Activated CD4-positive, alpha-beta memory T cell treated with anti-CD3 and anti-CD28 coated beads for 36 hours (primary cell): ENCODE measurements at regions of chr7 and their contacts with region 1.

Region 1: GRCh38 chr7:47945261-47946001 is 2.8 kb downstream of the PKD1L1 start:
- DNase-seq: peak; percentile 81
- H3K4me3 Mint-ChIP-seq: no peak overlapping the region
- H3K27ac Mint-ChIP-seq: no peak overlapping the region
- H3K4me1 Mint-ChIP-seq: no peaks in the 10 kb centered on the region
- H3K27me3 Mint-ChIP-seq: no peaks in the 10 kb centered on the region

Region 2: DNA sequence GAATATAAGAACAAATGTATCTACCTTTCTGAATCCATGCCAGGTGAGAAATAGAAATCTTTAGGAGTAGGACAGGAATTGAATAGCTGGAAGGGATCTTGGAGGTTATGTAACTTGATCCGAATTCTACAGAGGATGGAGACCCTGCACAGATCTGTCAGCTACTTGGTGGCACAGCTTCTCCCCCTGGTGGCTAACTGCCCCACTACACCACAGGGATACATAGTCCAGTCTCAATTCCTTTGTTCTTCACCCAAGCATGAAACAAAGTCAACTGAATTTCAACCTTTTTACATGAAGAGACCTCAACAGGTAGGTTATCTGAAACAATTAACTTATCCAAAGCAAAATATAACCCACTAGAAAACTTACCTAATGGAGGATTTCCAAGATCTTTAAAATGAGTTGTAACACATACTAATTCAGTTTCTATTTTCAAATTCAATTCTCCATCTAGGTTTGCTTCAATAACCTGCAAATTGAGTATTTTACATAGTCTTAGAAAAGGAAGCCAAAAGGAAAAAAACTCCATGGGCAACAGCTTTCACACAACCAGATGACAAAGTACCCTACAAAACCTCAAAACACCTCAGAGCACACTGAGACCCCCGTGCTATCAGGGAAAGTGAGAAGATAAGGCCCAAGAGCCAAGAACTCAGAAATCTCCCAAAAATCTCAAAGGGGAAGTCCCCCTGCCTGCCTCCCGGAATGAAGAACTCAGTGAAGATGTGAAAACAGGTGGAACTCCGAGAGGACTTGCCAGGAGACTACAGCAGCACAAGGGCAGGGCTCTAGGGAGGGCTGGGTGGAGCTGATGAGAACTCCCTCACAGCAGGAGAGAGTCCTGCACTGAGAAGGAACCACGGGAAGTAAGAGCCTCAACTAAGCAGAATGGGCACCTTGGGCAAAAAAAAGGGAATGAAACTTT is 23.7 kb after region 1 on chr7:
- CTCF ChIA-PET with region 1: interaction called, 12 read pairs
- POLR2A ChIA-PET with region 1: no interaction called
- intact Hi-C with region 1: no loop called
- DNase-seq: peak; percentile 63
- H3K4me3 Mint-ChIP-seq: no peak overlapping the region
- H3K27ac Mint-ChIP-seq: peak overlapping the region; percentile 34
- H3K4me1 Mint-ChIP-seq: peaks cover 30% of the 10 kb centered on the region
- H3K27me3 Mint-ChIP-seq: no peaks in the 10 kb centered on the region

Region 3: GRCh38 chr7:48154792-48155413 is 209.5 kb after region 1 on chr7:
- CTCF ChIA-PET with region 1: interaction called, 55 read pairs
- POLR2A ChIA-PET with region 1: no interaction called
- intact Hi-C with region 1: loop called (anchors 1 kb)
- DNase-seq: peak; percentile 48
- H3K4me3 Mint-ChIP-seq: no peak overlapping the region
- H3K27ac Mint-ChIP-seq: no peak overlapping the region
- H3K4me1 Mint-ChIP-seq: no peaks in the 10 kb centered on the region
- H3K27me3 Mint-ChIP-seq: peaks cover 12% of the 10 kb centered on the region